PC-9 (cell line): ENCODE measurements at regions of chr2 and their contacts with region 1.

Region 1: GRCh38 chr2:67295851-67296250 is 101.3 kb upstream of the ETAA1 start:
- DNase-seq: no peak
- H3K4me3 ChIP-seq: no peak overlapping the region
- H3K27ac ChIP-seq: no peak overlapping the region
- H3K4me1 ChIP-seq: peaks cover 10% of the 10 kb centered on the region
- H3K27me3 ChIP-seq: no peaks in the 10 kb centered on the region
- CTCF ChIP-seq: no peak

Region 2: DNA sequence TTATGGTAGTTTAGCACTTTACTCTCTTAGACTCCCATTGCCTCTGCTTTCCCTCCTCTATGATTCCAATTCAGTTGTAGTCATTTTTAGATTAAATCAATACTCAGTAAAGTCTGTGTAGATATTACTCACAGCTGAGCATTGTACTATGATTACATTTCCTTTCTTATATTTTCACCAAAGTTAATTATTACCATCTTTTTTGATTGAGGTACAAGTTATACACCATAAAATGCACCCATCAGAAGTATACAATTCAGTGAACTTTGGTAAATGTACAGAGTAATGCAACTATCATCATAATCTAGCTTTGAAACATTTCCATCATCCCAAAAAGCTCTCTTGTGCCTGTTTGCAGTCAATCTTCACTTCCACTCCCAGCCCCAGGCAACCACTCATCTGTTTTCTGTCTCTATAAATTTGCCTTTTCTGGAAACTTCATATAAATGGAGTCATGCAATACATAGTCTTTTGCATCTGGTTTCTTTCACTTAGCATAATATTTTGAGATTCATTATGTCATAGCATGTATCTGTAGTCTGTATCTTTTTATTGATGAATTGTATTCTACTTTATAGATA is 71.1 kb after region 1 on chr2:
- CTCF ChIA-PET with region 1: no interaction called
- POLR2A ChIA-PET with region 1: no interaction called
- intact Hi-C with region 1: no loop called
- DNase-seq: no peak
- H3K4me3 ChIP-seq: no peak overlapping the region
- H3K27ac ChIP-seq: no peak overlapping the region
- H3K4me1 ChIP-seq: no peaks in the 10 kb centered on the region
- H3K27me3 ChIP-seq: no peaks in the 10 kb centered on the region
- CTCF ChIP-seq: no peak

Region 3: GRCh38 chr2:67489396-67489795 is 193.5 kb after region 1 on chr2:
- CTCF ChIA-PET with region 1: no interaction called
- POLR2A ChIA-PET with region 1: interaction called, 12 read pairs
- intact Hi-C with region 1: no loop called
- DNase-seq: no peak
- H3K4me3 ChIP-seq: no peak overlapping the region
- H3K27ac ChIP-seq: no peak overlapping the region
- H3K4me1 ChIP-seq: no peaks in the 10 kb centered on the region
- H3K27me3 ChIP-seq: no peaks in the 10 kb centered on the region
- CTCF ChIP-seq: no peak

Region 4: DNA sequence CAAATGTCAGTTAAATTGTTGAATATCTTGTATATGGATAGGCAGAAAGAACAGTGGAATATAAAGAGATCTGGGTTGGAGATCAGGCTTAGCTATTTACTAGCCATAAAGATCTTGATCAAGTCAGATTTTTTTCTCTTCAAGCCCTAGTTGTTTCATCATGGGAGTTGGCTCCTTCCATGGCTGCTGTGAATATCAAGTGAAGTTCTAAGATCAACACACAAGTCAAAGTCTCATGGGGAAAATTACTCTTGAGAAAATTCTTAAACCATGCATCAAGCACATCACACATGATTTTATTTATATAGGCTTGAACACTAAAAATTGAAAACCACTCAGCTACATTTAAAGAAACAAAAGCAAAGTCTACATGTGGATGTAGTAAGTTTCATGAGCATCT is 687.1 kb after region 1 on chr2:
- CTCF ChIA-PET with region 1: no interaction called
- POLR2A ChIA-PET with region 1: no interaction called
- intact Hi-C with region 1: no loop called
- DNase-seq: no peak
- H3K4me3 ChIP-seq: no peak overlapping the region
- H3K27ac ChIP-seq: no peak overlapping the region
- H3K4me1 ChIP-seq: no peaks in the 10 kb centered on the region
- H3K27me3 ChIP-seq: no peaks in the 10 kb centered on the region
- CTCF ChIP-seq: no peak